OCI-LY7 (cell line): ENCODE measurements at regions of chr7 and their contacts with region 1.

Region 1: DNA sequence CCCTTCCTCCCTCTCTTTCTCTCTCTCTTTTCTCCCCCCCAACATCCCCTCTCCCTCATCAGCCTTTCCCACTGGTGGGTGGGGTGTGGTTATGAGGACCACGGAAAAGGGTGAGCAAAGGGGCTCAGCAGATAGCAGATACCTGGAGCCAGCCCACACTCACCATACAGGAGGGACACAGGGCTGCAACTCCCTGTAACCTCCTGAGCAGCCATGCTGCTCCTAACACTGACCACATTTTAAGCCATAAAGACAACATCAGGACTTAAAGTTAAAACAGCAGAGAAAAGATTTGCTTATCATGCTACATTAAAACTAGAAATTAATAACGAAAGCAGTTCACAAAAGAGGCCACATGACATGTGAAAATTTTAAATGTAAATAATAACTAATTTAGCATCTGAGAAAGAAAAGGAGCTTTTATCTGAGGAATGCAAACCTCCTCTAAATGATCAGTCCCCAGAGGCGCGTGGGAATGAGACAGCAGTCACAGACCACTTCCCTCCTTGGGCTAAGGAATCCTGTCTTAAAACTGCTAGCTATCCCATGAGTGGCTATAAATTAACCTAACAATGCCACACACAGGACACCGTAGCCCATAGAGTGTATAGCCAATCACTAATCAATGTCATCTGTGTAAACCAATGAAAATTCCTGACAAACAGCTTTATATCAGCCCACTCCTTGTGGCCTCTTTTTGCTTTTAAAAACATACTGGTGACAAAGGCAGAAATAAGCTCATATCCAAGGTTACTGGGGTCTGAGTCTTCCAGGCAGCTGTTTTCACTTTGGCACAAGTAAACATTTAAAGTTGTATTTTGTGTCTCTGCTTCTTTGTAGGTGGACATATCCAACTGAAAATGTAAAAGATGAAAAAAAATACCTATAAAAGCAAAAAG is 33.3 kb downstream of the PKD1L1 start:
- DNase-seq: no peak
- H3K4me3 ChIP-seq: no peak overlapping the region
- H3K27ac ChIP-seq: no peak overlapping the region
- H3K4me1 ChIP-seq: no peaks in the 10 kb centered on the region
- CTCF ChIP-seq: no peak

Region 2: GRCh38 chr7:47932016-47932415 is 17.1 kb after region 1 on chr7:
- CTCF ChIA-PET with region 1: no interaction called
- POLR2A ChIA-PET with region 1: interaction called, 10 read pairs
- intact Hi-C with region 1: no loop called
- DNase-seq: no peak
- H3K4me3 ChIP-seq: no peak overlapping the region
- H3K27ac ChIP-seq: no peak overlapping the region
- H3K4me1 ChIP-seq: peaks cover 12% of the 10 kb centered on the region
- CTCF ChIP-seq: no peak